Activated naive CD4-positive, alpha-beta T cell treated with anti-CD3 and anti-CD28 coated beads, Interleukin-2, amount 10 ng/mL, durations not matched to agents 7 days and 5 days (primary cell): ENCODE measurements at regions of chr12 and their contacts with region 1.

Region 1: GRCh38 chr12:9750276-9751203 is 10.2 kb downstream of the CD69 start:
- DNase-seq: peak; percentile 62
- H3K4me3 Mint-ChIP-seq: peak overlapping the region; percentile 48
- H3K27ac Mint-ChIP-seq: peak overlapping the region; percentile 94
- H3K4me1 Mint-ChIP-seq: peaks cover 65% of the 10 kb centered on the region
- H3K27me3 Mint-ChIP-seq: peaks cover 4% of the 10 kb centered on the region

Region 2: GRCh38 chr12:9634177-9634803 is 116.2 kb before region 1 on chr12:
- CTCF ChIA-PET with region 1: interaction called, 17 read pairs
- DNase-seq: peak; percentile 87
- H3K4me3 Mint-ChIP-seq: no peak overlapping the region
- H3K27ac Mint-ChIP-seq: peak overlapping the region; percentile 4
- H3K4me1 Mint-ChIP-seq: peaks cover 66% of the 10 kb centered on the region
- H3K27me3 Mint-ChIP-seq: peaks cover 4% of the 10 kb centered on the region

Region 3: GRCh38 chr12:9723351-9723750 is 27.2 kb before region 1 on chr12:
- CTCF ChIA-PET with region 1: no interaction called
- DNase-seq: no peak
- H3K4me3 Mint-ChIP-seq: no peak overlapping the region
- H3K27ac Mint-ChIP-seq: no peak overlapping the region
- H3K4me1 Mint-ChIP-seq: peaks cover 31% of the 10 kb centered on the region
- H3K27me3 Mint-ChIP-seq: peaks cover 3% of the 10 kb centered on the region

Region 4: DNA sequence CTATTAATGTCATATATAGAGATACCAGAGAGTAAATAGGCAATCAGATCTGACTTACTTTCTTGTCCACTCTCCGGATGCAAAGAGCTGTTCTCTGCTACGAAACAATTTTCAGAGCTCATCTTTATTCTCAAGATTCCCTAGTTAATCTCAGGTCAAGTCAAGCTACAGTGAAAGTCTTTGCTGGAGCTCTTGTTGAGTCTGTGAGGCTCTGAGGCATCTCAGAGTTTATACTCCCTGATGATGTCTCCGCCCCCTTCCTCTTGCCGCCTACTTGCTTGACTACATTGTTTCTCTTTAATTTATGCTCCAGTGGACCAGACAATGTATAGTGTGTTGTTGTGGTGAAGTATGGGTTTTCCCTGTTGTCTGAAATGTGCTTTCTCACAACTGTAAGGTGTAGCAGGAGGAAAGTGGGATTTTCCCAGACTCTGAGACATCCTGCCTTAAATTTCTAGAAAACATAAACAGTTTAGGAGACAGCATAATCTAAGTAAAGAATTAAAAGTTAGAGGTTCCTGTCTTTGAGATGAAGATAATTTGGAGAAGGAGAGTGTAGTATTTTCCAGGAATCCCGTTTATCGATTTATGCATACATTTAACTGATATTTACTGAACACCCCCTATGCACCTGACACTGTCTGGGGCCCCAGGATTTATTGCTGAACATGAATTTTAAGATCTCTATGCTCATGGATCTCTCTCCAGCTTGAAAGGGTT is 10.3 kb after region 1 on chr12 and contains the start of gene CD69:
- CTCF ChIA-PET with region 1: interaction called, 35 read pairs
- DNase-seq: peak; percentile 89
- H3K4me3 Mint-ChIP-seq: peak within 1 kb of the TSS; percentile 98
- H3K27ac Mint-ChIP-seq: peak within 1 kb of the TSS; percentile 98
- H3K4me1 Mint-ChIP-seq: peaks cover 43% of the 10 kb centered on the region
- H3K27me3 Mint-ChIP-seq: no peaks in the 10 kb centered on the region

Region 5: DNA sequence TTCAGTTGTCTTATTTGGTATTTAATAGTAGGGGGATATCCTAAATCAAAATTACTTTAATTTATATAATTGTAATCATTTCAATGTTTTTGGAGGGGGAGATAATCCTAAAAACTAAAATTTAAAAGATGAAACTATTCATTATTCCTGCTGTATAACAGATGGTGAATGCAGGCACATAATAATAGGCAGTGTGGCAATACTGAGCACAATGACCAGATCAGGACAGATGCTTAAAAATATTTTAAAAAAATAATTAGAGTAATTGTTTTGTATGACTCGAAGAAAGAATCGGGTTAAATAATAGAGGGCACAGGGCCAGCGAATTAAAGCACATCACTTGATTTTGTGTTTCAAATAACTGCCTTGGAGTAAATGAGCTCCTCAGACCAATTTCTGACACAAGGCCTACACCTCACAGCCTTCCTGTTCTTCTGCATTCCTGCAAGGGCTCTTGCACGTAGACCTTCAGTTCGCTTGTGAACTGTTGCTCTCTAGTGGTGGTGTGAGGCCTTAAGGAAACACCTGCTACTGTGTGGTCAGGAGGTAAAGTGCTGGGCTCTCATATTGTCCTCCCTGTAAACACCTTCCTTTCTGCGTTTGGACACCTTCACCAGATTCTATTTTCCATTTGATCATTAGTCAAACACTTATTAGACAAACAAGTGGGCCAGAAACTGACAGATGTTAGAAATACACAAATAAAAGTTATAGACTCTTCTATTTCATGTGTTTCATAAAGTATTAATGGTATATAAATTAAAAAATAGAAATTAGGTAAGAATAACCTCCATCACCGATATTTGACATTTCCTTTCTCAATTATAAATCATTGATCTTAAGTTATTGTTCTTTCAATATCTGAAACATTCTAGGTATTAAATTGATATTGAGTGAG is 47.4 kb after region 1 on chr12:
- CTCF ChIA-PET with region 1: interaction called, 657 read pairs
- DNase-seq: peak; percentile 81
- H3K4me3 Mint-ChIP-seq: peak overlapping the region; percentile 74
- H3K27ac Mint-ChIP-seq: peak overlapping the region; percentile 95
- H3K4me1 Mint-ChIP-seq: peaks cover 45% of the 10 kb centered on the region
- H3K27me3 Mint-ChIP-seq: peaks cover 4% of the 10 kb centered on the region

Region 6: GRCh38 chr12:9869307-9870161 is 119.0 kb after region 1 on chr12 and contains the start of gene CLEC2B:
- CTCF ChIA-PET with region 1: interaction called, 12 read pairs
- DNase-seq: peak; percentile 56
- H3K4me3 Mint-ChIP-seq: peak within 1 kb of the TSS; percentile 73
- H3K27ac Mint-ChIP-seq: peak within 1 kb of the TSS; percentile 99
- H3K4me1 Mint-ChIP-seq: peaks cover 22% of the 10 kb centered on the region
- H3K27me3 Mint-ChIP-seq: no peaks in the 10 kb centered on the region

Region 7: DNA sequence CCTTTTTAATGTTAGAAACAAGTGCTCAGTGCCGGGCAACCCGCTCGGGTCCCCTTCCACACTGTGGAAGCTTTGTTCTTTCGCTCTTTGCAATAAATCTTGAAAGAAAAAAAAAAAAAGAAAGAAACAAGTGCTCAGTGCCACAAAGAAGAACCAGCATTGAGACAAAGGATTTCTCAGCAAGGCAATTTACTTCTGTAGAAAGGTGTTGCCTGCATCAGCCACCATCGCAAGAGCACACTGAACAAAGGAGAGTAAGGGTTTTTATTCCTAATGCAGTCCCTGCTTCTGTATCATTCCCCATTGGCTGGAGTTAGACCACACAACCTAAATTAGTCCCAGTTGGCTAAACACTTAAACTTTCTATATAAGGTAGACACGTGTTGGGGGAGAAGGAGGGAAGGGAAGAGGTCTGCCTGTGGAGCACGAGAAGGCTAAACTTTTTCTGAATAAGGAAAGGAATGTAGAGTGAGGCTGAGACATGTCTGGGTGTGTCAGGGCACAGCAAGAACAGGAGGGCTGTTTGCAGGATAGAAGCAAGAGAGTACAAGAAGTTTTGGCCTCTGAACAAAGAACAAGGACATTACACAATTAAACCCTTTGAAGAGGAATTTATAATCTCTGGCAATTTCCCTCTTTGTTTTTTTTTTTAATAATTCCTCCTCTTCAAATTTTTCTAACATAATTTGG is 152.1 kb after region 1 on chr12:
- CTCF ChIA-PET with region 1: no interaction called
- DNase-seq: no peak
- H3K4me3 Mint-ChIP-seq: no peak overlapping the region
- H3K27ac Mint-ChIP-seq: no peak overlapping the region
- H3K4me1 Mint-ChIP-seq: peaks cover 21% of the 10 kb centered on the region
- H3K27me3 Mint-ChIP-seq: peaks cover 10% of the 10 kb centered on the region

Region 8: DNA sequence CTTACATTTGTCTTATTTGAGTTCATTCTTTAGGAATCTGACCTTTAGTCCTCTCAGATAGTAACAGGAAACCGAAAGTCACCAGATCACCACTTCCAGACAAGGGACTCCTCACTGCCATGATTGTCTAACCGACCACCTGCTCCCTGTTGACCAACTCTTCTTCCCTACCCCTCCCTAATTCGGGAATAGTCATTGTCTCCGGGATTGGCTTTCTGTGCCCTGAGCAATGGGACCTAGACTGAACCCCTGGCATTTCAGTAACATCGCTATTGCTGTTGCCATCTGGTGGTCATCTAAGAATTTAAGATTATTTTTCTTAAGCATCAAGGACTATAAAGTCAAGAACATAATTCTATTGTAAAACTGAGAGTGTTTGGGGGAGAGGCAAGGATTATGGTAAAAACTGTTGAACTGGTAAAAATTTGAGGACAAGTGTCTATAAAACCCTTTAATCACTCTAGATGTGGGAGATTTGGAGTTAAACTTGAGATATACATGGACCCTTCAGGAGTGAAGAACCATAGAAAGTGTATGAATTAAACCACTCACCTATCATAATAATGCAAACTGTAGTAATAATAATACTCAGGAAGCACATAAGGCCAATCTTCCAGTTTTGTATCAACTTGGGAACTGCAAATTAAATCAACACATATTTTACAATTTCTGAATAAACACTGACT is 175.3 kb after region 1 on chr12:
- CTCF ChIA-PET with region 1: interaction called, 26 read pairs
- DNase-seq: no peak
- H3K4me3 Mint-ChIP-seq: peak overlapping the region; percentile 60
- H3K27ac Mint-ChIP-seq: no peak overlapping the region
- H3K4me1 Mint-ChIP-seq: peaks cover 23% of the 10 kb centered on the region
- H3K27me3 Mint-ChIP-seq: peaks cover 11% of the 10 kb centered on the region

Region 9: GRCh38 chr12:10140001-10140400 is 389.5 kb after region 1 on chr12:
- CTCF ChIA-PET with region 1: interaction called, 25 read pairs
- DNase-seq: peak; percentile 68
- H3K4me3 Mint-ChIP-seq: no peak overlapping the region
- H3K27ac Mint-ChIP-seq: no peak overlapping the region
- H3K4me1 Mint-ChIP-seq: no peaks in the 10 kb centered on the region
- H3K27me3 Mint-ChIP-seq: peaks cover 27% of the 10 kb centered on the region